ENCODE measurements at regions of chr6 and their contacts with region 1.

Region 1: GRCh38 chr6:167479901-167480648 is 155.2 kb downstream of the TTLL2 start:
- DNase-seq: no peak
- ATAC-seq: peak; percentile 41
- H3K4me3 ChIP-seq: no peak overlapping the region
- H3K27ac ChIP-seq: peak overlapping the region in 1 of 2 donors; percentile 19
- H3K4me1 ChIP-seq: peaks cover 0 to 6% of the 10 kb centered on the region in 2 donors
- H3K27me3 ChIP-seq: no peaks in the 10 kb centered on the region
- CTCF ChIP-seq: no peak

Region 2: GRCh38 chr6:167314180-167314821 is 165.8 kb before region 1 on chr6:
- intact Hi-C with region 1: no loop called
- DNase-seq: no peak
- ATAC-seq: no peak
- H3K4me3 ChIP-seq: no peak overlapping the region
- H3K27ac ChIP-seq: no peak overlapping the region
- H3K4me1 ChIP-seq: no peaks in the 10 kb centered on the region
- H3K27me3 ChIP-seq: no peaks in the 10 kb centered on the region
- CTCF ChIP-seq: no peak

Region 3: GRCh38 chr6:167904791-167905190 is 424.7 kb after region 1 on chr6:
- intact Hi-C with region 1: loop called in 1 of 2 experiments (anchors 5 kb)
- DNase-seq: no peak
- ATAC-seq: no peak
- H3K4me3 ChIP-seq: no peak overlapping the region
- H3K27ac ChIP-seq: no peak overlapping the region
- H3K4me1 ChIP-seq: peaks cover 0 to 7% of the 10 kb centered on the region in 2 donors
- H3K27me3 ChIP-seq: no peaks in the 10 kb centered on the region
- CTCF ChIP-seq: no peak